Activated T-helper 2 cell treated with anti-CD3 and anti-CD28 coated beads, Interferon-gamma antibody, Interleukin-2, Interleukin-4, amounts not matched to agents 10 μg/mL and 5 μg/mL and 100 μg/mL, durations not matched to agents 14 hours and 24 hours and 36 hours (primary cell): ENCODE measurements at regions of chr1 and their contacts with region 1.

Region 1: GRCh38 chr1:15526490-15527339 is at the start of gene DNAJC16:
- DNase-seq: peak; percentile 99
- H3K4me3 Mint-ChIP-seq: peak within 1 kb of the TSS; percentile 87
- H3K27ac Mint-ChIP-seq: peak within 1 kb of the TSS; percentile 98
- H3K4me1 Mint-ChIP-seq: peaks cover 44% of the 10 kb centered on the region
- H3K27me3 Mint-ChIP-seq: no peaks in the 10 kb centered on the region
- total RNA-seq, gene DNAJC16: 10.9 and 18.7 TPM in 2 replicates

Region 2: GRCh38 chr1:15430787-15431570 is 95.7 kb before region 1 on chr1:
- intact Hi-C with region 1: no loop called
- DNase-seq: peak; percentile 57
- H3K4me3 Mint-ChIP-seq: no peak overlapping the region
- H3K27ac Mint-ChIP-seq: no peak overlapping the region
- H3K4me1 Mint-ChIP-seq: peaks cover 6% of the 10 kb centered on the region
- H3K27me3 Mint-ChIP-seq: no peaks in the 10 kb centered on the region

Region 3: DNA sequence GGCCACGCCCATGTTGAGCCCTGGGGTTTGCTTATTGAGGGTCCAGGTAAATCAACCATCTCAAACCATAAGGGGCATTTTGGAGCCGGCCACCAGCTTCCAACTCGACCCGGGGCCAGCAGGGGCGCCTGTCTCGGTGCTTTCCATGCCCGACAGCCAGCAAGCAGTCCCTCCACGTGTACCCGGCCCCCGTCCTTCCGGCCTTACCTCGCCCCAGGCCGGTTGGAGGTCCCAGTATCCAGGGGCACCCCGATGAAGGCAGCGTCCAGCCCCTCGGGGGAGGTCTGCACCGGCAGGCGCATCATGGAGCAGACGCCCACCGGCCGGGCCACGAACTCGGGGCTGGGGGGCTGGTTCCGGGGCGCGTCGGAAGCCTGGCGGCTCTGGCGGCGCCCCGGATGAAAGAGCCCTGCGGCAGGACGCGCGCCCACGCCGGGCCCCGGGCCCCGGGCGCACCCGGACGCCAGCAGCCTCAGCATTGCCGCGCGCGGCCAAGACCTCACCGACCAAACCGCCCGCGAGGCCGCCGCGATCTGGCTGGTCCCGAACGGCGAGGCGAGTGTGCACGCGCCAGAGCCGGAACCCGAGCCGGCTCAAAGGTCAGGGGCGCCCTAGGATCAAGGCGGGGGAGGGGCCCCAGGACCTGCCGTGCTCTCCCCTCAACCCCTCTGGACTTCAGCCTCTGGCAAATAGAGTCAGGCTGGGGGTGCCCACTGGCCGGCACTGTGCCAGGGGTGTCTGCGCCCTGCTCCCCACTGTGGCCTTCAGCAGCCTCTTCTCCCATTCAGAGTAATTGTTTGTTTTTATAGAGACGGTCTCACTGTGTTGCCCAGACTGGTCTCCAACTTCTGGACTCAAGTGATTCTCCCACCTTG is 58.0 kb after region 1 on chr1 and contains the start of gene AGMAT:
- intact Hi-C with region 1: loop called (anchors 1 kb)
- DNase-seq: peak; percentile 59
- H3K4me3 Mint-ChIP-seq: peak within 1 kb of the TSS; percentile 81
- H3K27ac Mint-ChIP-seq: peak within 1 kb of the TSS; percentile 87
- H3K4me1 Mint-ChIP-seq: peaks cover 15% of the 10 kb centered on the region
- H3K27me3 Mint-ChIP-seq: no peaks in the 10 kb centered on the region
- total RNA-seq, gene AGMAT: 30.1 and 32.5 TPM in 2 replicates